ENCODE measurements at regions of chrX and their contacts with region 1.

Region 1: DNA sequence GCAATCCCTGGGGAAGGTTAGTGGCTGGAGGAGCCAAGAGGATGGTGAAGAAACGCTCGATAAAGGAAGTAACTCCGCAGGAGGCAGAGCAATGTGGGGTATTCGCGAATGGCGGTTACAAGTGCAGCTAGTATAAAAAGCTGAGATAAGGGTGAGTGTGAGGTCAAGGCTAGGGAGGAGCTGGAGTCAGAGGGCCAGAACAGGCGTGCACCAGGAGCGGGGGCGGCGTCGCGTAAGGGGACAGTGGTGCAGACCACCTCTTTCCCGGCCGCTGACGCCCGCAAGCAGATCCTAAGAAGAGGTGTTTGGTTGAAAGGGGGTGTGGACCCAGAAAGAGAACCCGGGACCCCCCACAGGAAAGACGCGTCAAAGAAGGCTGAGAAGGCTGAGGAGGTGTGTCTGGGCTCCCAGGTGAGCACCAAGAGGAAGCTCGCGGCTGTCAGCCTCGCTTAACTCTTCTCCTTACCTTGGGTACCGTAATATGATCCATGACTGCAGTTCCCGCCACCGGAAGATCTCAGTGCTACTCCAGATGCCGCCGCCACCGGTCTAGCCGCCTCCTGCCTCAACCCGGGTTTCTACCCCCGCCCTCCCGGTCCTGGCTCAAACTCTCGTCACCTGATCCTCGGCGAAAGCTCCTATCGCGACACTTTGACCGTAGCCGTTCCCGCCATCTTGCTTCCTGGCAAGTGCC is at the start of gene MTMR8:
- DNase-seq: peak; percentile 21 to 85
- H3K4me3 ChIP-seq: peak within 1 kb of the TSS; percentile 65 to 79
- H3K27ac ChIP-seq: peak within 1 kb of the TSS; percentile 48 to 75
- H3K4me1 ChIP-seq: peaks cover 0 to 3% of the 10 kb centered on the region in 2 donors
- H3K27me3 ChIP-seq: no peaks in the 10 kb centered on the region
- CTCF ChIP-seq: no peak
- total RNA-seq, gene MTMR8: 0.85 TPM

Region 2: DNA sequence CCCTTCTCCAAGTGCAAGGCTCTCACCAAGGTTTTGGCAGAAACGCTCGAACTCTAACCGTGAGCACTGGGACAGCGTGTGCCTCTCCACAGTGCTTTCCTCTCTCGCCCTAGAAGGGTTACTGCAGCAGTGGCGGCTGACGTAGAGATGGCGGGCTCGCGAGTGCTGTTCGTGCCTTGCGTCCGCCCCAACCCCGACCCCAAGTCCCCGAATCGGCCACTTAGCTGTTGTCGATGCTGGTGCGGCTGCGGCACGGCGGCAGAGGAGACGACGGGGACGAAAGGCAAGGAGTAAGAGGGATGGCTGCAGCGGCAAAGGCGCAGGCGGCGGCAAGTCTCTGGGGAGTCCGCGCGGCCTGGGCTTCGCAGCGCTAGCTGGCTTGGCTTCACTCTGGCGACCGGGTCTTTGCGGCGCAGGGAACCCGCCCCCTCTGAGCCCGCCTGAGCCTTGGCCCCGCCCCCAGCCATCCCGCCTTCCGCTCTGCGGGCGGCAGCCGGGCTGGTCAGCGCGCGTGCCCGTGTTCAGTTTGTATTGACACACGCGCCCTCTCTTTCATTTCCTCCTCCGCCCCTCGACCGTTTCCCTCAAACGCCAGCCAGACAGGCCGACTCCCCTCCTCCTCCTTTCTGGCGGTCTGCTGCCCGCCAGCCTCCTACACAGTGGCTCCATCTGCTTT is 1043.9 kb before region 1 on chrX and contains the start of gene SPIN4:
- intact Hi-C with region 1: loop called (anchors 10 kb)
- DNase-seq: peak; percentile 39 to 91
- H3K4me3 ChIP-seq: peak within 1 kb of the TSS; percentile 66 to 68
- H3K27ac ChIP-seq: peak within 1 kb of the TSS; percentile 70 to 72
- H3K4me1 ChIP-seq: no peaks in the 10 kb centered on the region
- H3K27me3 ChIP-seq: no peaks in the 10 kb centered on the region
- CTCF ChIP-seq: no peak
- total RNA-seq, gene SPIN4: 9.2 TPM

Region 3: DNA sequence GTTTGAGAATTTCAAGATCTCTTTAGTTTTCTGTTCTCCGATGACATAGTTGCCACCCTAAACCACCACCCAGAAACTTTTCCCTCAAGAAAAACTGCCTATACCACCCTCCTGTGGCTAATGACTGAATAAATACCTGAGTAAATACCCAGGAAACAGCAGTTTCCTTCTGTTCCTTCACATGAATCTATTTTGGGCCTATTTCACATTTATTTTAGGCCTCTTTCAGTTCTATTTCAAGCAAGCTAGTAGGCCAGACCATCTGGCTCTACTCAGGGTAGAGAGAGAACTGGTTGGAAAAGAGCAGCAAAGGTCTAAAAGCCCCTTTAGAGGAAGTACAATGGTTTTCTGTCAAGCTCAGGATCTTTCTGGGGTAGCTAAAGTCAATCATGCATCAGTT is 633.4 kb before region 1 on chrX:
- intact Hi-C with region 1: loop called (anchors 5 kb)
- DNase-seq: no peak
- H3K4me3 ChIP-seq: no peak overlapping the region
- H3K27ac ChIP-seq: peak overlapping the region; percentile 45 to 72
- H3K4me1 ChIP-seq: no peaks in the 10 kb centered on the region
- H3K27me3 ChIP-seq: no peaks in the 10 kb centered on the region
- CTCF ChIP-seq: peak in 2 of 3 experiments; percentile 30 to 41

Region 4: GRCh38 chrX:63918611-63919010 is 476.4 kb before region 1 on chrX:
- intact Hi-C with region 1: loop called (anchors 10 kb)
- DNase-seq: peak in 1 of 2 donors; percentile 66
- H3K4me3 ChIP-seq: no peak overlapping the region
- H3K27ac ChIP-seq: peak overlapping the region in 1 of 2 donors; percentile 82
- H3K4me1 ChIP-seq: peaks cover 13 to 18% of the 10 kb centered on the region in 2 donors
- H3K27me3 ChIP-seq: no peaks in the 10 kb centered on the region
- CTCF ChIP-seq: peak in 2 of 3 experiments; percentile 13 to 45

Region 5: GRCh38 chrX:65034668-65035445 is 639.8 kb after region 1 on chrX:
- intact Hi-C with region 1: loop called (anchors 10 kb)
- DNase-seq: peak; percentile 15 to 85
- H3K4me3 ChIP-seq: peak within 1 kb of the TSS; percentile 55 to 71
- H3K27ac ChIP-seq: peak within 1 kb of the TSS; percentile 83 to 85
- H3K4me1 ChIP-seq: no peaks in the 10 kb centered on the region
- H3K27me3 ChIP-seq: no peaks in the 10 kb centered on the region
- CTCF ChIP-seq: peak; percentile 35 to 53 (median 39)

Measured in ascending aorta (tissue), 2 donors.